Activated CD4-positive, alpha-beta T cell treated with anti-CD3 and anti-CD28 coated beads, Interleukin-2, amount 10 ng/mL, durations not matched to agents 24 days and 14 days (primary cell): ENCODE measurements at regions of chr9 and their contacts with region 1.

Region 1: GRCh38 chr9:35570709-35571504 is 34.2 kb upstream of the TESK1 start:
- DNase-seq: peak; percentile 82
- H3K4me3 Mint-ChIP-seq: peak overlapping the region; percentile 66
- H3K27ac Mint-ChIP-seq: peak overlapping the region; percentile 89
- H3K4me1 Mint-ChIP-seq: peaks cover 27% of the 10 kb centered on the region
- H3K27me3 Mint-ChIP-seq: no peaks in the 10 kb centered on the region

Region 2: DNA sequence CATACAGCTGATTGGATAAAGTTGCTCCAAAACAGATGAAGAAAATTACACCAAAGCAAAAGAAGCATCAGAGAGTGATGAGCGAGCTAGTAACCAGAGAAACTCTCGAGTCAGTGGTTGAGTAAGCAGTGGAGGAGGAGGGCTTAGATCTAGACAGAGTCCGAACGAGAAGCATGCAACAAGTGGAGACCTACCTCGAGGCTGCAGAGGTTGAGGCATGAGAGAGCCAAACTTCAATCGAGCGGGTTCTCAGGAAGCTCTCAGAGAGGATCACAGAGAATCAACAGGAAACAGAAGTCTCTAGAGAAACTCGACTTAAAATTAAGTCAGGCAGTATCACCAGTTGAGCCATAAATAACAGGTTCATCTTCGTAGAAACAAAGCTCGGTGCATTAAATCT is 74.9 kb before region 1 on chr9:
- intact Hi-C with region 1: loop called (anchors 5 kb)
- DNase-seq: peak; percentile 79
- H3K4me3 Mint-ChIP-seq: peak overlapping the region; percentile 17
- H3K27ac Mint-ChIP-seq: no peak overlapping the region
- H3K4me1 Mint-ChIP-seq: peaks cover 27% of the 10 kb centered on the region
- H3K27me3 Mint-ChIP-seq: no peaks in the 10 kb centered on the region

Region 3: DNA sequence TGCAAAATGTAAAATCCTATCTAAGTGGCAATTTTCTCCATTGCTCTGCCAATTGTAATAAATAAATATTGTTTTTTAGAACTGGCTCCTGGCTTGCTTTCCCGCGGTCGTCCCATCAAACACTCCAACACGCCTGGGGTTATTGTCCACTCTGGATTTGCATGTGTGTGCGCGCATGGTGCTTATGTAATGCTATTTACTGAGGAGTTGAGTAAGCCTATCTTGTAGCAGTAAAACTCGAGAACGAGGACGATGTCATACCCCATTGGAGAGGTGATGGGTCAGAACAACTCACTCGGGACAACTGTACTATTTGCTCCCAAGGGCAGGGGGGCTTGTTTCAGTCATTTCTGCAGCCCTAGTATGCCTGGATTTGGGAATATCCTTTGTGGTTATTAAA is 1242.2 kb after region 1 on chr9:
- intact Hi-C with region 1: no loop called
- DNase-seq: no peak
- H3K4me3 Mint-ChIP-seq: no peak overlapping the region
- H3K27ac Mint-ChIP-seq: no peak overlapping the region
- H3K4me1 Mint-ChIP-seq: no peaks in the 10 kb centered on the region
- H3K27me3 Mint-ChIP-seq: peaks cover 29% of the 10 kb centered on the region